Activated T-helper 2 cell treated with anti-CD3 and anti-CD28 coated beads, Interferon-gamma antibody, Interleukin-2, Interleukin-4, amounts not matched to agents 10 μg/mL and 5 μg/mL and 100 μg/mL, durations not matched to agents 14 hours and 24 hours and 36 hours (primary cell): ENCODE measurements at regions of chr3 and their contacts with region 1.

Region 1: GRCh38 chr3:19946832-19947548 is at the start of gene RAB5A:
- DNase-seq: peak; percentile 97
- H3K4me3 Mint-ChIP-seq: peak within 1 kb of the TSS; percentile 98
- H3K27ac Mint-ChIP-seq: peak within 1 kb of the TSS; percentile 98
- H3K4me1 Mint-ChIP-seq: peaks cover 29% of the 10 kb centered on the region
- H3K27me3 Mint-ChIP-seq: peaks cover 2% of the 10 kb centered on the region
- total RNA-seq, gene RAB5A: 43.5 and 49.5 TPM in 2 replicates

Region 2: GRCh38 chr3:19146685-19147650 is 800.0 kb before region 1 on chr3:
- intact Hi-C with region 1: loop called (anchors 5 kb)
- DNase-seq: peak; percentile 38
- H3K4me3 Mint-ChIP-seq: peak overlapping the region; percentile 82
- H3K27ac Mint-ChIP-seq: peak overlapping the region; percentile 11
- H3K4me1 Mint-ChIP-seq: peaks cover 11% of the 10 kb centered on the region
- H3K27me3 Mint-ChIP-seq: peaks cover 45% of the 10 kb centered on the region

Region 3: DNA sequence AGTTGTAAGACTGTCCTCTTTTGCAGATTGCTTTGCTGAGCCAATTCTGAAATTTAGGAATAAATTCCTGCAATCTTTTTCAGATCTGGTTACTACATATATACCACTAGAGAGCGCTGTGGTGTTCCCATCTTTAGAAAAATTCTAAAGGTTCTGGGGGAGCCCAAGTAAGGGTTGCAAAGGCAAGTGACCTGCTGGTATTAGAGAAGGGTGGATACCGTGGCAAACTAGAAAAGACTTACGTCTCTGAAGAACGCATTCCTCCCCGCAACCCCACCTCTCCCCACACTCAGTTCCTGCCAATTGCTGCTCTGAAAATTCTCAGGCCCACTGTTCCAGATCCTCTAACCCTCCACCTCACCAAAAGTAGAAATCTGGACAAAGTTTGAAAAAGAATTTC is 61.5 kb before region 1 on chr3:
- intact Hi-C with region 1: loop called (anchors 1 kb)
- DNase-seq: no peak
- H3K4me3 Mint-ChIP-seq: no peak overlapping the region
- H3K27ac Mint-ChIP-seq: no peak overlapping the region
- H3K4me1 Mint-ChIP-seq: no peaks in the 10 kb centered on the region
- H3K27me3 Mint-ChIP-seq: peaks cover 7% of the 10 kb centered on the region

Region 4: GRCh38 chr3:20054549-20054987 is 107.6 kb after region 1 on chr3:
- intact Hi-C with region 1: loop called (anchors 1 kb)
- DNase-seq: peak; percentile 39
- H3K4me3 Mint-ChIP-seq: no peak overlapping the region
- H3K27ac Mint-ChIP-seq: no peak overlapping the region
- H3K4me1 Mint-ChIP-seq: peaks cover 25% of the 10 kb centered on the region
- H3K27me3 Mint-ChIP-seq: no peaks in the 10 kb centered on the region